ENCODE measurements at regions of chrX and their contacts with region 1.

Region 1: DNA sequence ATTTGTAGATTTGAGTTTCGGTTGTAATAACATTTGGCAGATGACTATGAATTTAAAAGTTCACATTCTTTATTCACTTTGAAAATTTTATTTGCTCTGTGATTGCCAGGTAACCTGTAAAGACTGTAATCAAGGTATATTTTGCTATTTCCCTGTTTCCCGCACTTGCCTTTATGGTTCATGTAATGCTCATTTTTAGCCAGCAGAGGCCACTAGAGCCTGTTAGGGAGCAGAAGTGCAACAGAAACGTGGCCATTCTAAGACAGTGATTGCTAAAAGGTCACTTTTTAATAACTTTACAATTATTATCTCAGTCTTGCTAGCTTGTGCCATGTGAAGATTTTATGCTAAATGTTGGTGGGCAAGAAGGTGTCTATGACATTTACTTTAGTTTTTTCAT is 12.4 kb downstream of the YIPF6 start:
- DNase-seq: peak in 1 of 2 experiments; percentile 16
- H3K4me3 ChIP-seq: no peak overlapping the region
- H3K27ac ChIP-seq: no peak overlapping the region
- H3K4me1 ChIP-seq: peaks cover 4% of the 10 kb centered on the region; the same call in 1 of the 2 replicates
- H3K27me3 ChIP-seq: no peaks in the 10 kb centered on the region
- CTCF ChIP-seq: peak; percentile 82

Region 2: DNA sequence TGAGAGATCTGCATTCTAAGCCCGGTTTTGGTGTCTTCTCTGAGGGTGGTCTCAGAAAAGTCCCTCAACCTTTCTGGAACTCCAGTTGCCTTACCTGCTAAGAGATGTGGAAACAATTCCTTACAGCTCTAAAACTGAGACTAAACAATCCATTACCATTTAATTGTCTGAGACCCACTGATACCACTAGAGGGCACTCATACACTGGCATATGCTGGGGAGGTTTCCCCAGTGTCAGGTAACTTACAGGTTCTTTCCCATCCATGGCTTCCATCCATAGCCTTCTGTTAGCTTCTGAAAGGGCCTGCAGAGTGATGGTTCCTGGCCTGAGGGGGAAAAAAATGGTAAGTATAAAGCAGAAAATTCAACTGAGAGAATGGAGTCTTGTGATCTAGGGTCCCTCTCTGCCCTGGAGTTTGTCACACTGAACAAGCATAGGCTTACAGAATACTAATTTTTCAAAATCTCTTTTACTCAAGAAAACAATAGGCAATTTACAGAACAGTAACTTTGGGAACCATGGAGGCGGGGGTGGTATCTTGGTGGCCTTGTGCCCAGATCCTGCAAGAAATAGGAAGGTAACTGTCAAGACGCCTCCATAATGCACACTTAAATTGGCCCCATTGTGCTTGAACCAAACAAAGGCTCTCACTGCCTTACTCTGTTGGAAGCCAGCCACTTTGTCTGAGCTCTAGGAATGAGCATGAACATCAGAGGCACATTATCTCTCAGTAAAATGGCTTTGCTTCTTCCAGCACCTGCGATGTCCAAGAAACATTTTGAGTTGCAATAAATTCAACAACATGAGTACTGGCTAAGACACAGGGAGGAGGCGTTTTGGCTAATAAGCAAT is 314.1 kb before region 1 on chrX:
- CTCF ChIA-PET with region 1: interaction called, 7 read pairs
- POLR2A ChIA-PET with region 1: no interaction called
- intact Hi-C with region 1: loop called (anchors 1 kb)
- DNase-seq: peak; percentile 39 to 54
- H3K4me3 ChIP-seq: no peak overlapping the region
- H3K27ac ChIP-seq: no peak overlapping the region
- H3K4me1 ChIP-seq: peaks cover 8% of the 10 kb centered on the region; the same call in 1 of the 2 replicates
- H3K27me3 ChIP-seq: no peaks in the 10 kb centered on the region
- CTCF ChIP-seq: peak; percentile 82

Region 3: GRCh38 chrX:68396961-68397419 is 114.3 kb before region 1 on chrX:
- CTCF ChIA-PET with region 1: interaction called, 11 read pairs
- POLR2A ChIA-PET with region 1: no interaction called
- intact Hi-C with region 1: no loop called
- DNase-seq: no peak
- H3K4me3 ChIP-seq: no peak overlapping the region
- H3K27ac ChIP-seq: no peak overlapping the region
- H3K4me1 ChIP-seq: no peaks in the 10 kb centered on the region
- H3K27me3 ChIP-seq: no peaks in the 10 kb centered on the region
- CTCF ChIP-seq: no peak

Region 4: GRCh38 chrX:68659385-68659784 is 148.1 kb after region 1 on chrX:
- CTCF ChIA-PET with region 1: no interaction called
- POLR2A ChIA-PET with region 1: no interaction called
- intact Hi-C with region 1: loop called (anchors 5 kb)
- DNase-seq: no peak
- H3K4me3 ChIP-seq: no peak overlapping the region
- H3K27ac ChIP-seq: no peak overlapping the region
- H3K4me1 ChIP-seq: no peaks in the 10 kb centered on the region
- H3K27me3 ChIP-seq: no peaks in the 10 kb centered on the region
- CTCF ChIP-seq: no peak

Region 5: DNA sequence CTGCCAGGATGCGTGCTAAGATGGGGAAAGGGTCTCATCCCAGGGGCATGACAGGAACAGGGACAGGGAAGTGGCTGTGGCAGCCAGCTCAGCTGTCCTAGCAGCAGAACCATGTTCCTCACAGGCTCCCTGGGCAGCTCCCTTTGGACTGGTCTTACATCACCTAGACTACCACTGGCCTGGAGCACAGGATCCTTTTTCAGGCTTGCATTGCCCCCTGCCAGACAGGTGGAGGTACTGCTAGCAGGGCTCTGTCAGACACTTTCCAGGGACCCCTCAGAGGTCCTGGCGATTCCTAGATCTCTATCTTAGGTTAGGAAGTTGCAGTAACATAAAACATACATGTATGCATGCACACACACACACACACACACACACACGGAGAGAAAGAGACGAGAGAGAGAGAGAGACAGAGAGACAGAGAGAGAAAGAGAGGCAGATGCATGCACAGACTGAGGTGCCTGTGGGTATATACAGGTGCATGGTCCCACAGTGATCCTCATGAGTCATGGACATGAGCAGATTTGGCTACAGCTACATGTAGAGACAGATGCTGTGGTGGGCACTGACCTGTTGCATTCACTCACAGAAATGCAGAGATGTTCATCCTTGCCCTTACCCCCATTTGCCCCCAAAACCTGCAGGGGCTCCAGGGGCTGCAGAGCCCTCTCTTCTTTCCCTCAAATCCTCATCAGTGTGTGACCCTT is 199.8 kb after region 1 on chrX:
- CTCF ChIA-PET with region 1: no interaction called
- POLR2A ChIA-PET with region 1: no interaction called
- intact Hi-C with region 1: loop called (anchors 1 kb)
- DNase-seq: peak; percentile 50 to 52
- H3K4me3 ChIP-seq: no peak overlapping the region
- H3K27ac ChIP-seq: no peak overlapping the region
- H3K4me1 ChIP-seq: no peaks in the 10 kb centered on the region
- H3K27me3 ChIP-seq: no peaks in the 10 kb centered on the region
- CTCF ChIP-seq: peak; percentile 80

Region 6: GRCh38 chrX:68807818-68808217 is 296.6 kb after region 1 on chrX:
- CTCF ChIA-PET with region 1: no interaction called
- POLR2A ChIA-PET with region 1: no interaction called
- intact Hi-C with region 1: loop called (anchors 10 kb)
- DNase-seq: peak in 1 of 2 experiments; percentile 7
- H3K4me3 ChIP-seq: no peak overlapping the region
- H3K27ac ChIP-seq: no peak overlapping the region
- H3K4me1 ChIP-seq: no peaks in the 10 kb centered on the region
- H3K27me3 ChIP-seq: no peaks in the 10 kb centered on the region
- CTCF ChIP-seq: peak; percentile 31; the same call in 1 of the 2 replicates

Measured in PC-9 (cell line).